PC-9 (cell line): ENCODE measurements at regions of chr12 and their contacts with region 1.

Region 1: DNA sequence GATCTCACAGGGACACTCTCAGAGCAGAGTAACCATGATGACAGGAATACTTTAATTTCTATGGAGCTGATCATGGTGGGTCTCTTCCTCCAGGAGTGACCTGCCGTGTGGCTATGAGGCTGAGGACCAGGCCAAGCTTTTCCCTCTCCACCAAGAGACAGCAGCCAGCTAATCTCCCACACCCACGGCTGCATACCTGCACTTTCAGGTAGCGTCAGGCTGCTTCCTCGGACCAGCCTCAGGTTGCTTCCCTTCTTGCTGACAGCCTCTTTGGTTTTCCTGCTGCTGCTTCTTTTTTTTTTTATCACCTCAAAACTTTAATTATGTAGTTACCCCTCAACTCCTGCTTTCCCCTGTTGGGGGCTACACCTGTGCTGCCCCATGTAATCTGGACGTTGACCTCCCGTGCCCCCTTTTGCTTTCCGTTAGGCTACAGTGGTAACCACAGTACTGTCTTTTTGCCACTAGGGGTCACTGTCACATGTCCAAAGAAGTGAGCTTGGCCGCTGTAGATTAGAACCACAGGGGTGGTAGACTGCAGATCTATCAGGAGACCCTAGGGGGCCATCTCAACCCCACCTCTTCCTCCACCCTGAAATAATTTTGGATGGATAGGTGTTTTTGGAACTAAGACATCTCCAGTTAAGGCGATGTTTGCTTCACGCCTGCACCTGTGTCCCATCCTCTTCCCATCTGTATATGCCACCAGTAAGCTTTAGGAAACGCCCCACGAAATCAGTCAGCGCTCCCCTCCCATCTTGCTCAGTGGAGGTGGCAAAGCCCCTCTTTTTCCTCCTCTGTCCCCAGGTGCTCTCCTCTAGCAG is 7.8 kb upstream of the PIP4K2C start:
- DNase-seq: peak; percentile 65 to 67
- H3K4me3 ChIP-seq: no peak overlapping the region
- H3K27ac ChIP-seq: no peak overlapping the region
- H3K4me1 ChIP-seq: no peaks in the 10 kb centered on the region
- H3K27me3 ChIP-seq: peaks cover 34% of the 10 kb centered on the region
- CTCF ChIP-seq: peak; percentile 96

Region 2: DNA sequence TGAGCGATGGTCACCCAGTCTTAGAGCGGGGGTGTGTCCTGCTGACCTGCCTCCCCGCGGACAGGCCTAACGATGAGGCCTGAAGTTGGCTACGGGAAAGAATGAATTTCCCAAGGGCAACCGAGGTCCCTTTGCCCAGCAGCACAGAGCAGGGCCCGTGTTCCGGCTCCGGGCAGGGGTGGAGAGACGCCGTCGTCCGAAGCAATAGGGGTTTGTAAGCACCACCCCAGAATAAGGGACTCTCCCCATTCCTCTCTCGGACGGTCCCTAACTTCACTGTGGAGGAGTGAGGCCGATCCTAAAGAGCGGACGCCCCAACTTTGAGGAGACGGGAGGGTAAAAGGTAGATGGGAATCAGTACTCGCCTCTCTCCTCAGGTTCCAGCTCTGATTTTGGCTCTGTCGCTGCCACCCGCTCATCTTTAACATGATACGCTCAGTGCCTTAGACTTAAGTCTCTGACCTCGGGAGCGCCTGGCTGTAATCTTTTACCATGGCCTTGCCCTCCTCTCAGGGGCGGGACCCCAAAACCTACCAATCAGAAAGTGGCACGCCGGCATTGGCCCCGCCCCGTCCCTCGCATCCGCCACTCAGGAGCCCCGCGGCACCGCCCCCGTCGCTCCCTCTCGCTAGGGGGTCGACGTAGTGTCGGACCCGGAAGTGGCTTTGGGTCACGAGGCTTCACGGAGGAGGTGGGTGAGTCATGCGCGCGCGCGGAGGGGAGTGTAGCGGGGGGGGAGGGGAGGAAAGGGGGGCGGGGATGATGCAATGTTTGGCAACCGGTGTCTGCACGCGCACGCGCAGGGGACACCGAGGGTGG is 63.0 kb before region 1 on chr12 and contains the start of gene DDIT3:
- CTCF ChIA-PET with region 1: no interaction called
- POLR2A ChIA-PET with region 1: no interaction called
- intact Hi-C with region 1: no loop called
- DNase-seq: peak; percentile 91 to 99
- H3K4me3 ChIP-seq: peak within 1 kb of the TSS; percentile 97
- H3K27ac ChIP-seq: peak within 1 kb of the TSS; percentile 99
- H3K4me1 ChIP-seq: peaks cover 34% of the 10 kb centered on the region
- H3K27me3 ChIP-seq: no peaks in the 10 kb centered on the region
- CTCF ChIP-seq: 0 out of 2 replicates have a peak, but pooled peaks have one; percentile 29
- total RNA-seq, gene DDIT3: 15.6 and 17.3 TPM in 2 replicates

Region 3: GRCh38 chr12:57621497-57622292 is 38.5 kb after region 1 on chr12:
- CTCF ChIA-PET with region 1: interaction called, 5 read pairs
- POLR2A ChIA-PET with region 1: no interaction called
- intact Hi-C with region 1: loop called (anchors 1 kb)
- DNase-seq: peak in 1 of 2 experiments; percentile 37
- H3K4me3 ChIP-seq: no peak overlapping the region
- H3K27ac ChIP-seq: no peak overlapping the region
- H3K4me1 ChIP-seq: no peaks in the 10 kb centered on the region
- H3K27me3 ChIP-seq: peaks cover 74% of the 10 kb centered on the region
- CTCF ChIP-seq: peak; percentile 79

Region 4: DNA sequence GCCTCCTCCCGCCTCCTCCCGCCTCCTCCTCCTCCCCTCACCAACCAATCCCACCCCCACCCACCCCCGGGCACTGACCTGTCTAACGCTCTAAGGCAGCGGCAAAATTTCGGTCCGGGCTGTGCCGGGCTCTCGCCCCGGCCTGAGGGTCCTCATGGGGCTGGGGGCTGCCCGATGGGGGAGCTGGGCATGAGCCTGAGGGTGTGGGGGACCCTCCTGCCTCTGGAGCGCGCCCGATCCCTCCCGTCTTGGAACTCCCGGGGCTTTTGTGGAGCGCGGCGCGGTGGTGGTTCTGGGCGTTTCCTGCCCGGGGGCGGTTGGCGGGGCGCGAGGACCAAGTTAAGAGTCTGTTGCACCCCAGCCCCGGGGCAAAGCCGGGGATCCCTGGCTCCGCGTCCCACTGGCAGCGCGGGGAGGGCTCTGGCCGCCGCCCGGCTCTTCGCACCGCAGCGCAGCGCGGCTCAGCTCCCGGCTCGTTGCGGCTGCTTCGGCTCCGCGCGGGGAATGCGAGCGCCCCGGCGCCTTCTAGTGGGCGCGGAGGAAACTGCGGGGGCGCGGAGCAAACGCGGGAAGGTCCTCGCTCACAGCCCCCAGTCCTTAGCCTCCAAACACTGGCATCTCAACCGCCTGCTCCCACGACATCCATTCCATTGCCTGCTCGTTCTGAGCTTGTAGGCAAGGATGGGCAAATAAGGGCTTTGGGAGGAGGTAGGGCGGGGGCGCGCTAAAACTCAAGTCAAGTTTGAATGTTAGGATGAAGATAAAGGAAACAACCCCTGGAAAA is 49.7 kb after region 1 on chr12 and contains the start of gene B4GALNT1:
- CTCF ChIA-PET with region 1: interaction called, 8 read pairs
- POLR2A ChIA-PET with region 1: no interaction called
- intact Hi-C with region 1: loop called (anchors 1 kb)
- DNase-seq: peak; percentile 40 to 72
- H3K4me3 ChIP-seq: peak within 1 kb of the TSS; percentile 64
- H3K27ac ChIP-seq: no peak within 1 kb of the TSS
- H3K4me1 ChIP-seq: peaks cover 8% of the 10 kb centered on the region; the same call in 1 of the 2 replicates
- H3K27me3 ChIP-seq: no peaks in the 10 kb centered on the region
- CTCF ChIP-seq: peak; percentile 83
- total RNA-seq, gene B4GALNT1: 15.0 and 17.9 TPM in 2 replicates